ENCODE measurements at regions of chr4 and their contacts with region 1.

Region 1: GRCh38 chr4:40316782-40317635 is 18.1 kb upstream of the CHRNA9 start:
- DNase-seq: peak; percentile 95
- H3K4me3 Mint-ChIP-seq: peak overlapping the region; percentile 85
- H3K27ac Mint-ChIP-seq: peak overlapping the region; percentile 100
- H3K4me1 Mint-ChIP-seq: peaks cover 55% of the 10 kb centered on the region
- H3K27me3 Mint-ChIP-seq: no peaks in the 10 kb centered on the region
- CTCF ChIP-seq: peak; percentile 61

Region 2: GRCh38 chr4:40185830-40186664 is 131.0 kb before region 1 on chr4:
- CTCF ChIA-PET with region 1: interaction called, 5 read pairs
- POLR2A ChIA-PET with region 1: interaction called, 27 read pairs
- intact Hi-C with region 1: no loop called
- DNase-seq: peak; percentile 20
- H3K4me3 Mint-ChIP-seq: no peak overlapping the region
- H3K27ac Mint-ChIP-seq: peak overlapping the region; percentile 70
- H3K4me1 Mint-ChIP-seq: peaks cover 17% of the 10 kb centered on the region
- H3K27me3 Mint-ChIP-seq: no peaks in the 10 kb centered on the region
- CTCF ChIP-seq: no peak

Region 3: DNA sequence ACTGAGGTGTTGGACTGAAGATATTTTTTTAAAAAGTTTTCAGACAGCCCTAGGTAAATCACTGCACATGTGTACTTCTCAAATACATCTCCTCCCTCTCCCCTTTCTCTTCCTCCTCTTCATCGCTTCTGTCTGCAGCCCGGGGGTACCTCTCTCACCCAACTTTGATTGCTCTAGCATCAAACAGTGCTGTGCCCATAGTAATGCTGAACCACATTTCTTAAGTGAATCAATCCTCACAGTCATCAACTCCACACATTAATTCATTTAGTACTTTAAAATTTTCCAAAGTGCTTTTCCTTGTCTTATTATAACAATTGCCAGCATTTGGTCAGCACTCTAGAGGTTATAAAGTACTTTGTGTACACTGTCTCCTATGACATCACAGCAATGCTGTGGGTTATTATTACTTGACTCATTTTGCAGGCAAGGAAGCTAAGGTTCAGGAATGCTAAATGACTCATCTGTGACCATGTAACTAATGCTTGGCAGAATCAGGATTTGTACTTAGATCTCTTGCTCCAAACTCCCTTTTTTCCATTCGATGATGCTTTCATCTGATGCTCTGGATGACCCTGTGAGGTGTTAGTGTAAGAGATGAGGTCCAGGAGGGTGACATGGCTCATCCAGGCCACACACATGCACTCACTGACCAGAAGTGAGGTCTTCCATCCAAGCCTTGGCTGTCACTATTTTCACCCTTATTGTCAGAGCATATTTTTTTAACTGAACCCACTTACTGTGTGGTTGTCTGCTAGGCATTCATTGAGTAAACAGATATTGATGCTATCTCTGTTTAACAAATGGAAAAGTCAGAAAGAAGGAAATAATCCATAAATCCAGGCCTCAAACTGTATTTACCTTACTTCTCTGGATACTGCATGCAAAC is 61.4 kb before region 1 on chr4:
- CTCF ChIA-PET with region 1: interaction called, 3 read pairs
- POLR2A ChIA-PET with region 1: interaction called, 23 read pairs
- intact Hi-C with region 1: no loop called
- DNase-seq: peak; percentile 92
- H3K4me3 Mint-ChIP-seq: peak overlapping the region; percentile 1
- H3K27ac Mint-ChIP-seq: peak overlapping the region; percentile 86
- H3K4me1 Mint-ChIP-seq: peaks cover 40% of the 10 kb centered on the region
- H3K27me3 Mint-ChIP-seq: no peaks in the 10 kb centered on the region
- CTCF ChIP-seq: no peak

Region 4: DNA sequence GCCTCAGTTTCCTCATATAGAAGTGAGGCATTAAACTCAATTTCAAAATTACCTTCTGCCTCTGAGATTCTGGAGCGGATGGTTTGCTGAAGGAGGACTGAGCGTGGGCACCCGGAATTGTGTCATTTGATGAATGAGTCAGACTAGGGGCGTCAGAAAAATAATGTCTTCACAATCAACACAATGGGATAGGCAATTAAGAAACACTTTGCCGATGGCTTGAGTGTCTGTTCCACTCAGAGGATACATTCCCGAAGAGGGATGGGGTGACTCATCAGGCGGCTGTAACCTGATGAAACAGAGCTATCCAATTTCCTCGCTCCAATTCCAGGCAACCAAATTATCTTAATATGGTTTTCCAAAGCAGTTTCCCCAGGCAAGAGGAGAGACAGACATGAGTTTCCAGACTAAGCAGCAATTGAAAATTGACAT is 16.9 kb after region 1 on chr4:
- CTCF ChIA-PET with region 1: interaction called, 53 read pairs
- POLR2A ChIA-PET with region 1: interaction called, 15 read pairs
- intact Hi-C with region 1: no loop called
- DNase-seq: peak; percentile 98
- H3K4me3 Mint-ChIP-seq: peak overlapping the region; percentile 4
- H3K27ac Mint-ChIP-seq: peak overlapping the region; percentile 32
- H3K4me1 Mint-ChIP-seq: peaks cover 30% of the 10 kb centered on the region
- H3K27me3 Mint-ChIP-seq: no peaks in the 10 kb centered on the region
- CTCF ChIP-seq: no peak

Region 5: DNA sequence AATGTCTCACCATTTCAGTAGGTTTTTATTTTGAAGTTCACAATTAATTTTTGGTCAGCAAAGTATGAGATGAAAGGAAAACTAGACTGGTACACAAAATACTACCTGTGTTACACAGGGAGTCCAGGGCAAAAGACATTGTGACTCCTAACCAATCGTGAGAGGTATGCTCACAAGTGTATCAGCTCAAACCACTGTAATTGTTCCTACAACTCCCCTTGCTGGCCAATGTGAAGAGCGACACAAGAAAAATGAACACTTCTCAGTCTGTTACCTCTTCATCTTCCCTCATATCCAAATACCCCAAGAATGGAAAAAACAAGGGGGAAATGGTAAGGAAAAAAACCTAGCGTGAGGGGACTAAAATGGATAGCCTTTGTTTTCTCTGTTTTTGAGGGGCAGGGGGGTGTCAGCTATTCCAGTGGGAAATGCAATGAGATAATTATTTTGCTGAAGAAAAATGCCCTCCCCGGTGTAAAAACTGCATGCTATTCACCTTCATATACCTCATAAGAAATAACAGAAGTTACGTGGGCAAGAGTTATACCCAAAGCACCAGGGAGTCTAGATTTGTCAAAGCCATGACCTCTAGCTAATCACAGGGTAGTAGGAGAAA is 402.1 kb after region 1 on chr4:
- CTCF ChIA-PET with region 1: interaction called, 8 read pairs
- POLR2A ChIA-PET with region 1: interaction called, 3 read pairs
- intact Hi-C with region 1: loop called (anchors 1 kb)
- DNase-seq: peak; percentile 74
- H3K4me3 Mint-ChIP-seq: no peak overlapping the region
- H3K27ac Mint-ChIP-seq: no peak overlapping the region
- H3K4me1 Mint-ChIP-seq: no peaks in the 10 kb centered on the region
- H3K27me3 Mint-ChIP-seq: no peaks in the 10 kb centered on the region
- CTCF ChIP-seq: peak; percentile 60

Measured in MCF 10A (cell line).